GM12878 (cell line): ENCODE measurements at regions of chr14 and their contacts with region 1.

Region 1: GRCh38 chr14:50038398-50039119 is 77.8 kb downstream of the VCPKMT start:
- DNase-seq: peak; percentile 100
- ATAC-seq: peak; percentile 87
- H3K4me3 ChIP-seq: peak overlapping the region; percentile 1; the same call in 1 of the 2 replicates
- H3K27ac ChIP-seq: peak overlapping the region; percentile 96
- H3K4me1 ChIP-seq: peaks cover 49% of the 10 kb centered on the region
- H3K27me3 ChIP-seq: no peaks in the 10 kb centered on the region
- CTCF ChIP-seq: 0 out of 6 replicates have a peak, but pooled peaks of 2 of the 3 experiments have one; percentile 10
- EP300 ChIP-seq: peak; percentile 91 to 99
- POLR2A ChIP-seq: peak; percentile 56
- RAD21 ChIP-seq: peak; percentile 35

Region 2: DNA sequence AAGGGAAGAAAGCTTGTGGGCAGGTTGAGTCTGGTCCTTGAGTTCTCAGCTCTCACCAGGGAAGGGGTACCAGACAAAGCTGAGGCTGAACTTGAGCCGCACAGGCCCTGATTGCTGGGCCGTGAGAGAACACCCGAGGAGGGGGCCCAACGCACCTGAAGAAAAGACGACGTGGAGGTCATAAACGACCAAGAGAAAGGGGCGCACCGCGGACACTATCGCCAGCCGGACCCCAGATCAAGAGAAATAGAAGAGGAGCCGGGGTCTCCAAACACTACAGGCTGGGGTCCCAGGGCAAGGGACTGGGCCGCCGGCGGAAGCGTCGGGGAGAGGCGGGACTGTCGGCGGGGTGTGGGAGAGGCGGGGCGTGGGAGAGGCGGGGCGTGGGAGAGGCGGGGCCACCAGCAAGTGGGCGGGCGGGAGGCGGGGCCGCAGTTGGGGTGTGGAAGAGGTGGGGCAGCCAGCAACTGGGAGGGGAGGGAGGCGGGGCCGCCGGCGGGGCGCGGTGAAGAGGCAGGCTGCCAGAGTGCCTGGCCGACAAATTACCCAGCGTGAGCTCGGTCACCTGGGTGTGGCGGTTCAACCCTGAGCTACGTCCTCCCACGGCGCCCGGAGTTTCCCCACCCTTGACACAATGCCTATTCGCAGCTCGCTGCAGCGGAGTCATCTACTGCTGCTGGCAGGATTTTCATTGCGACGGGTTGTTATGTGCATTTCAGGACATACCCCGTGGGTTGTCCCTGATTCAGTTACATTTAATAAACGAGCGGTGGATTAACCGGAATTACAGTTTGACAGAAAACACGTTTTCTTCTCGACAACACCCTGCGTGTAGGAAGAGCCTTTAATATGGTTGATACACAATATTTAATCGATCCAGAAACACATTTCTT is 170.5 kb before region 1 on chr14:
- CTCF ChIA-PET with region 1: interaction called, 68 read pairs
- POLR2A ChIA-PET with region 1: interaction called, 12 read pairs
- RAD21 ChIA-PET with region 1: interaction called, 38 read pairs
- SMC1A ChIA-PET with region 1: interaction called, 35 read pairs
- in situ Hi-C with region 1: no loop called
- intact Hi-C with region 1: loop called (anchors 2 kb)
- DNase-seq: peak; percentile 92
- ATAC-seq: peak; percentile 89
- H3K4me3 ChIP-seq: peak overlapping the region; percentile 89
- H3K27ac ChIP-seq: peak overlapping the region; percentile 93
- H3K4me1 ChIP-seq: peaks cover 20% of the 10 kb centered on the region
- H3K27me3 ChIP-seq: no peaks in the 10 kb centered on the region
- CTCF ChIP-seq: no peak
- EP300 ChIP-seq: no peak
- POLR2A ChIP-seq: peak; percentile 83
- RAD21 ChIP-seq: no peak

Region 3: DNA sequence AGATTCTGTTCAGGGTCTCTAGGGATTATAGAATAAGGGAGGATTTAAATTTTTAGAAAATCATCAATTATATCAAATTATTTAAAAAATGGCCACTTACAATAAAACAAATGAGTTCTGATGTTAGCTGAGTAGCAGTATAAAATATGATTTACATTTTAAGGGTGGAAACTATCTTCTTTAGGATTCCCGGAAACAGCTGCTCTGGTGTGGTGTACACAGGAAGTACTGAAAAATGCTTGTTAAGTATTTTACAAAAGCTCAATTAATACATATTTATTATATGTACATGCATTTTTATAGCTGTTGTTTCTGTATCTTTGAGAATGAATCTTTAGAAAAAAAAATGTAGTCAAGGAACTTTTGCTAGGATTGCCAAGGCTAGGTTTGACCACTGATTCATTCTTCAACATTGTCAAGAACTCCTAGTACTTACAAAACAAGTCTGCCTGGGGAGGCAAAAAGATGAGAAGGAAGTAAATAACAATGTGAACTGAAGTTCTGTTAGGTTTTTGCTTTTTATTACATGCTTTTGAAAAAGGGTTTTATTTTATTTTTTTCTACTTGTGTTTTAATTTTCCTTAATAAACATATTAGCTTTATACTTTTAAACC is 97.6 kb before region 1 on chr14:
- CTCF ChIA-PET with region 1: no interaction called
- POLR2A ChIA-PET with region 1: no interaction called
- RAD21 ChIA-PET with region 1: no interaction called
- SMC1A ChIA-PET with region 1: no interaction called
- in situ Hi-C with region 1: no loop called
- intact Hi-C with region 1: no loop called
- DNase-seq: no peak
- ATAC-seq: no peak
- H3K4me3 ChIP-seq: no peak overlapping the region
- H3K27ac ChIP-seq: no peak overlapping the region
- H3K4me1 ChIP-seq: no peaks in the 10 kb centered on the region; the same call in none of the 2 replicates
- H3K27me3 ChIP-seq: no peaks in the 10 kb centered on the region
- CTCF ChIP-seq: no peak
- EP300 ChIP-seq: no peak
- POLR2A ChIP-seq: no peak
- RAD21 ChIP-seq: no peak

Region 4: DNA sequence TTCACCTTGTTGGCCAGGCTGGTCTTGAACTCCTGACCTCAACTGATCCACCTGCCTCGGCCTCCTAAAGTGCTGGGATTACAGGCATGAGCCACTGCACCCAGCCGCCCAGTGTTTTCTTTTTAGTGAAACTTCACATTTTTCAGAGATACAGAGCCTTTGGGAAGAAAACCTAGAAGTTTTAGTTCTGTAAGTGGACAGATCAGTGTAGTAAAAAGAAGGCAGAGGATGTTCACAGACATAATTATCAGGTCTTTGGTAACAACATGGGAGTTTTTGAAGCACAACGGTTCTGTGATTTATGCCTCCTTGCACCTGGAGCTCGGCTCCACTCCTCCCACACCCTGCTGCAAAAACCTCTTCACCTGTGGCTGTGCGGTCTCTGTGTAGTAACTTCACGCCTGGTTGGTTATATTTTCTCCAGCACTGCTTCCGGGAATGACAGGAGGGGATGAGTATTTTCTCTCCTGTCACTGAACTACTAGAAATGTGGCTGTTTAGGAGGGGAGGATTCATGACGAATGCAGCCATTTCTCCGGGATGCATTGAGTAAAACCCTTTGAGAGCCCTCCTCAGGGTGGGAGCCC is 78.6 kb before region 1 on chr14:
- CTCF ChIA-PET with region 1: interaction called, 6 read pairs
- POLR2A ChIA-PET with region 1: interaction called, 6 read pairs
- RAD21 ChIA-PET with region 1: interaction called, 20 read pairs
- SMC1A ChIA-PET with region 1: interaction called, 8 read pairs
- in situ Hi-C with region 1: no loop called
- intact Hi-C with region 1: loop called (anchors 2 kb)
- DNase-seq: peak; percentile 76
- ATAC-seq: peak; percentile 82
- H3K4me3 ChIP-seq: 0 out of 2 replicates have a peak overlapping the region, but pooled peaks have one; percentile 41
- H3K27ac ChIP-seq: peak overlapping the region; percentile 78
- H3K4me1 ChIP-seq: peaks cover 42% of the 10 kb centered on the region
- H3K27me3 ChIP-seq: no peaks in the 10 kb centered on the region
- CTCF ChIP-seq: no peak
- EP300 ChIP-seq: no peak
- POLR2A ChIP-seq: no peak
- RAD21 ChIP-seq: 0 out of 2 replicates have a peak, but pooled peaks have one; percentile 23

Region 5: DNA sequence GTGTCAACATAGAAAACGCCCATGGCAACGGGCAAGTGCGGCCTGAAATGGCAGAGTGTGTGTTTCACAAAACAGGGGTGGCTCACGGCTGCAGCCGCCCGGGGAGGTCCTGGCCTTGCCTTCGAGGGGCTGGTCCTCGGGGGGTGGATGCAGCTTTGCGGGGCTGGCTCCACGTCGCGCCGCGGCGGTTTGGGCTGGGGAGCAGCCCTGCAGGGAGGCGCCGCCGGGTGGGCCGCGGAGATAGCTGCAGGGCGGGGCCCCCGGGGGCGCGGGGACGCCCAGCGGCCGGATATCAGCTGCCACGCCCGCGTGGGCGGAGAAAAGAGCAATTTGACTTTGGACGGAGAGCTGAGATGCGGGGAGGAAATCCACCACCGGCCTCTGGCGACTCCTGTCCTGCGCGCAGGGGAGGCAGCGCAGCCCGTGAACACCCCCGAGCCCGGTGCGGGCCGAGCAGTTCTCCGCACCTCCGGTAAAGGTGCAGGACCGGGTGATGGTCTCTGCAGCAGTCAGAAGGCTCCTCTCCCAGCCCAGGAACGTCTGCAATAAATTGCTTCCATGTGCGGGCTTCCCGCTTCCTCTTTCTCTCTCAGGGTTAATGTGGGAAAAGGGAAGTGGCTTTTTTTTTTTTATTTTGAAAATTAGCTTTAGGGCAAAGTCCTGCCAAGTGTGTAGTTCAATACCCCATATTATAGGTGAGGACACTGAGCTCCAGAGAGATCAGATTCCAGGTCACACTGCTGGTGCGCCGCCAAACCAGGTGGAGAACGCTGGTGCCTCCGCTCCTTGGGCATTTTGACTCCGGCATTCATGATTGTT is 35.1 kb before region 1 on chr14:
- CTCF ChIA-PET with region 1: interaction called, 14 read pairs
- POLR2A ChIA-PET with region 1: interaction called, 40 read pairs
- RAD21 ChIA-PET with region 1: interaction called, 104 read pairs
- SMC1A ChIA-PET with region 1: interaction called, 40 read pairs
- in situ Hi-C with region 1: no loop called
- intact Hi-C with region 1: loop called (anchors 1 kb)
- DNase-seq: peak; percentile 60
- ATAC-seq: peak; percentile 52
- H3K4me3 ChIP-seq: peak overlapping the region; percentile 61
- H3K27ac ChIP-seq: peak overlapping the region; percentile 99
- H3K4me1 ChIP-seq: peaks cover 44% of the 10 kb centered on the region
- H3K27me3 ChIP-seq: no peaks in the 10 kb centered on the region
- CTCF ChIP-seq: peak; percentile 11 to 30 (median 19); a peak in 3 of 6 replicates
- EP300 ChIP-seq: peak in 1 of 2 experiments; percentile 5; a peak in 3 of 4 replicates
- POLR2A ChIP-seq: peak; percentile 85
- RAD21 ChIP-seq: 0 out of 2 replicates have a peak, but pooled peaks have one; percentile 31

Region 6: DNA sequence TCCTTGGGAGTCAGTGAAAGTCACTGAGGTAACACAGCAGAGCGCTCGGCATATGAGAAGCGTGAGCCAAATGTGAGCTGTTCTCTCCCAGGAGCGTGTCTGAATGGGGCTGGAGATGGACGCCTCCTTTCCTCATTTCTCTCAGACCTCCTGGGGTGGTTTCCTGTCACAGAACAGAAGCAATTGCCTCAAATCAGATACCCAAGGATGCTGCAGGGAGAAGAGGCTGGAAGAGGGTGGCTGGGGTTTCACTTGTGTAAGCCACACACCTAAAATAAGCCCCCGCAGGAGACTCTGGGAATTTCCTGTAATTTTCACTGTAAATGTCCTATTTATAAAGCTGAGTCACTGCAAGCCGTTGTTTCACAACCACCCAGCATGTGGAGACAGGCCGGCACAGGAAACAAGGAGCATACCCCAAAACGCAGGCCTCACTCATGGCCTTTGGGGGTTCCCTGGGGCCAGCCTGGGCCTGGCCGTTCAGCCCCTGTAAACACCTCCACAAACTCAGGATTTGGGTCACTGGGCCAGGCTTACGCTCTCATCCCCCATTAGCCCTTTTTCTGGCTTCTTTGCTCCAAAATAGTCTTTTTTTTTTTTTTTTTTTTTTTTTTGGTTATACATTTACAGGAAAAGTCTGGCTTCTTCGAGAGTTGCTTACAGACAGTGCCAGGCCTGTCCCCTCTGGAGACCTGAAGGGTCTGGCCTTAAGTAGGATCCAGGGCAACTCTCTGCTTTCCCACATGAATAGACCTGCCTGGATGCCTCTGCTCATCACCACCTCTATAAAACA is 22.5 kb after region 1 on chr14:
- CTCF ChIA-PET with region 1: interaction called, 14 read pairs
- POLR2A ChIA-PET with region 1: interaction called, 62 read pairs
- RAD21 ChIA-PET with region 1: interaction called, 110 read pairs
- SMC1A ChIA-PET with region 1: interaction called, 96 read pairs
- in situ Hi-C with region 1: no loop called
- intact Hi-C with region 1: loop called (anchors 1 kb)
- DNase-seq: no peak
- ATAC-seq: peak; percentile 51
- H3K4me3 ChIP-seq: 0 out of 2 replicates have a peak overlapping the region, but pooled peaks have one; percentile 25
- H3K27ac ChIP-seq: peak overlapping the region; percentile 98
- H3K4me1 ChIP-seq: peaks cover 53% of the 10 kb centered on the region
- H3K27me3 ChIP-seq: no peaks in the 10 kb centered on the region
- CTCF ChIP-seq: no peak
- EP300 ChIP-seq: peak in 1 of 2 experiments; percentile 66; a peak in 2 of 4 replicates
- POLR2A ChIP-seq: no peak
- RAD21 ChIP-seq: peak; percentile 32; the same call in 1 of the 2 replicates

Region 7: GRCh38 chr14:50109342-50109741 is 70.8 kb after region 1 on chr14:
- CTCF ChIA-PET with region 1: interaction called, 15 read pairs
- POLR2A ChIA-PET with region 1: no interaction called
- RAD21 ChIA-PET with region 1: interaction called, 13 read pairs
- SMC1A ChIA-PET with region 1: interaction called, 37 read pairs
- in situ Hi-C with region 1: no loop called
- intact Hi-C with region 1: loop called (anchors 1 kb)
- DNase-seq: no peak
- ATAC-seq: no peak
- H3K4me3 ChIP-seq: no peak overlapping the region
- H3K27ac ChIP-seq: no peak overlapping the region
- H3K4me1 ChIP-seq: peaks cover 18% of the 10 kb centered on the region
- H3K27me3 ChIP-seq: no peaks in the 10 kb centered on the region
- CTCF ChIP-seq: no peak
- EP300 ChIP-seq: no peak
- POLR2A ChIP-seq: no peak
- RAD21 ChIP-seq: no peak

Region 8: DNA sequence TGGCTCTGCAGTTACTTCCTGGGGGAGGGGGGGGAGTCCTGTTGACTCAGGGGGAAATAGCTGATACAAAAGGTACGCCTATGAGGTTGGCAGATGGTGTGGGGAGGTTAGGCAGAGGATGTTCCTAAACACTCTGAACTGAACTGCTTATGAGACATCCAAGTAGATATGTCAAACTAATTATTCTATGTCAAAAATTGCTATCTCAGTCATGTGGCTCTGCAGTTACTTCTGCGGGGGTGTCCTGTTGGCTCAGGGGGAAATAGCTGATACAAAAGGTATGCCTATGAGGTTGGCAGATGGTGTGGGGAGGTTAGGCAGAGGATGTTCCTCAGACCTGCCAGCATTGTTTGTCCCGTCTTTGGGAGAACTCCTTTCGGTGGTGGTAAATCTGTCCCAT is 82.9 kb after region 1 on chr14:
- CTCF ChIA-PET with region 1: no interaction called
- POLR2A ChIA-PET with region 1: no interaction called
- RAD21 ChIA-PET with region 1: no interaction called
- SMC1A ChIA-PET with region 1: no interaction called
- in situ Hi-C with region 1: no loop called
- intact Hi-C with region 1: no loop called
- DNase-seq: no peak
- ATAC-seq: no peak
- H3K4me3 ChIP-seq: no peak overlapping the region
- H3K27ac ChIP-seq: no peak overlapping the region
- H3K4me1 ChIP-seq: no peaks in the 10 kb centered on the region
- H3K27me3 ChIP-seq: no peaks in the 10 kb centered on the region
- CTCF ChIP-seq: no peak
- EP300 ChIP-seq: no peak
- POLR2A ChIP-seq: no peak
- RAD21 ChIP-seq: no peak